ENCODE measurements at regions of chr19 and their contacts with region 1.

Region 1: GRCh38 chr19:33771384-33772101 is 25.1 kb upstream of the KCTD15 start:
- DNase-seq: peak; percentile 73
- H3K4me3 ChIP-seq: no peak overlapping the region
- H3K27ac ChIP-seq: no peak overlapping the region
- H3K4me1 ChIP-seq: no peaks in the 10 kb centered on the region
- H3K27me3 ChIP-seq: peaks cover 7% of the 10 kb centered on the region
- CTCF ChIP-seq: peak; percentile 82 to 88 (median 86)
- EP300 ChIP-seq: no peak
- POLR2A ChIP-seq: no peak

Region 2: GRCh38 chr19:33273881-33274682 is 497.5 kb before region 1 on chr19:
- in situ Hi-C with region 1: loop called in 1 of 4 experiments (anchors 25 kb)
- intact Hi-C with region 1: no loop called
- DNase-seq: peak; percentile 79
- H3K4me3 ChIP-seq: no peak overlapping the region
- H3K27ac ChIP-seq: peak overlapping the region; percentile 81 to 90 (median 86)
- H3K4me1 ChIP-seq: peaks cover 6 to 34% (median 23%) of the 10 kb centered on the region in 4 donors
- H3K27me3 ChIP-seq: no peaks in the 10 kb centered on the region
- CTCF ChIP-seq: no peak
- EP300 ChIP-seq: no peak
- POLR2A ChIP-seq: no peak

Measured in transverse colon (tissue), 4 donors.